ENCODE measurements at regions of chr14 and their contacts with region 1.

Region 1: GRCh38 chr14:74684434-74684833 is 28.4 kb downstream of the AREL1 start:
- DNase-seq: peak in 3 of 9 experiments; percentile 6 to 49 (median 40)
- ATAC-seq: peak; percentile 59
- H3K4me3 ChIP-seq: no peak overlapping the region
- H3K4me3 Mint-ChIP-seq: peak overlapping the region; percentile 39
- H3K27ac ChIP-seq: peak overlapping the region in 1 of 2 experiments; percentile 19
- H3K27ac Mint-ChIP-seq: peak overlapping the region; percentile 72
- H3K4me1 ChIP-seq: peaks cover 23% of the 10 kb centered on the region
- H3K4me1 Mint-ChIP-seq: peaks cover 31% of the 10 kb centered on the region
- H3K27me3 ChIP-seq: no peaks in the 10 kb centered on the region
- H3K27me3 Mint-ChIP-seq: no peaks in the 10 kb centered on the region
- CTCF ChIP-seq: no peak

Region 2: DNA sequence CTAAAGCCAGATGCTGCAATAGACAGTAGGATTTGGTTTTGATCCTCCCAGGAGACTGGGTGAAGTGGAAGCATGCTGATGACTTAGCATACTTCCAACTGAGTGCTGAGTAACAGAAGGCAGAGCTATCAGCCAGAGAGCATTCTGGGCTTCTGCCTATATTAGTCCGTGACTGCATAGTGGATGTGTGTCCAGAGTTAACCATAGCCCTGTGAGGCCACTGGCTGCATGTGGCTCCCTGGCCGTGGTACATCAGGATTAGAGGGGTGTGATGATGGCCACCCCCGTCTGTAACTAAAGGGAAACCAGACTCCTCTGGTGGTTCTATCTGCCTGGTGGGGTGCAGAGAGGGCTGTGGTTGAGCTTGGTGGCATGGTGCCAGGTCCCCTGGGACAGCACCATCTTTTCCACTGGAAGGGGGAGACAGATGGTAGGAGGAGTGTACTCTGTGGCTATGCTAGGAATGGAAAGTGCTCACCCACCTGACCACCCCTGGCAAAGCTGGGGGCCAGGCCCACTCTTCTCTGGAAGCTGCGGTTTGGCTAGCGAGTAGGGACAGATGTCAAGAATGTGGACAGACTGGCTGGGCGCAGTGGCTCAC is 409.1 kb before region 1 on chr14:
- CTCF ChIA-PET with region 1: no interaction called
- POLR2A ChIA-PET with region 1: no interaction called
- intact Hi-C with region 1: no loop called
- DNase-seq: no peak
- ATAC-seq: no peak
- H3K4me3 ChIP-seq: no peak overlapping the region
- H3K4me3 Mint-ChIP-seq: no peak overlapping the region
- H3K27ac ChIP-seq: no peak overlapping the region
- H3K27ac Mint-ChIP-seq: no peak overlapping the region
- H3K4me1 ChIP-seq: no peaks in the 10 kb centered on the region
- H3K4me1 Mint-ChIP-seq: no peaks in the 10 kb centered on the region
- H3K27me3 ChIP-seq: no peaks in the 10 kb centered on the region
- H3K27me3 Mint-ChIP-seq: peaks cover 13% of the 10 kb centered on the region
- CTCF ChIP-seq: no peak

Region 3: GRCh38 chr14:74524076-74524811 is 160.2 kb before region 1 on chr14:
- CTCF ChIA-PET with region 1: no interaction called
- POLR2A ChIA-PET with region 1: no interaction called
- intact Hi-C with region 1: no loop called
- DNase-seq: no peak
- ATAC-seq: no peak
- H3K4me3 ChIP-seq: no peak overlapping the region
- H3K4me3 Mint-ChIP-seq: no peak overlapping the region
- H3K27ac ChIP-seq: no peak overlapping the region
- H3K27ac Mint-ChIP-seq: no peak overlapping the region
- H3K4me1 ChIP-seq: no peaks in the 10 kb centered on the region
- H3K4me1 Mint-ChIP-seq: no peaks in the 10 kb centered on the region
- H3K27me3 ChIP-seq: no peaks in the 10 kb centered on the region
- H3K27me3 Mint-ChIP-seq: no peaks in the 10 kb centered on the region
- CTCF ChIP-seq: no peak

Region 4: DNA sequence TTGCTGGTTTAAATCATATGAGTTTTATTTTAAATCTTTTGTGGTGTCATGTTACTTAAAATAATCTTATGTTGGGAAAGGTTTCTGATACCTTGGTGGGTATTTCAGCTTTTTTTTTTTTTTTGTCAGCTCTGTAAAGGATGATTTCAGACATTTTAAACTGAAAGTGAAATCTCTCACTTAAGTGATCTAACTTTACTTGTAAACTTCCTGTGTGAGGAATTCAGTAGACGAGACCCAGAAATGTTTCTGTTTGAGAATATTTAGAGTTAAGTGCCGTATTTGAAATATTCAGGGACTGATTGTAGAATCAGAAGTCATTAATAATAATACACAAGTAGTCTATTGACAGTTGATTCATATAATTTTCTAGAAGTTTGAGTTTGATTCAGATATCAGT is 153.7 kb after region 1 on chr14:
- CTCF ChIA-PET with region 1: no interaction called
- POLR2A ChIA-PET with region 1: no interaction called
- intact Hi-C with region 1: no loop called
- DNase-seq: peak in 2 of 9 experiments; percentile 50 to 73
- ATAC-seq: peak; percentile 76
- H3K4me3 ChIP-seq: peak overlapping the region in 1 of 2 experiments; percentile 36
- H3K4me3 Mint-ChIP-seq: peak overlapping the region; percentile 76
- H3K27ac ChIP-seq: peak overlapping the region; percentile 71 to 93
- H3K27ac Mint-ChIP-seq: peak overlapping the region; percentile 94
- H3K4me1 ChIP-seq: peaks cover 76% of the 10 kb centered on the region
- H3K4me1 Mint-ChIP-seq: peaks cover 81% of the 10 kb centered on the region
- H3K27me3 ChIP-seq: no peaks in the 10 kb centered on the region
- H3K27me3 Mint-ChIP-seq: no peaks in the 10 kb centered on the region
- CTCF ChIP-seq: no peak

Region 5: DNA sequence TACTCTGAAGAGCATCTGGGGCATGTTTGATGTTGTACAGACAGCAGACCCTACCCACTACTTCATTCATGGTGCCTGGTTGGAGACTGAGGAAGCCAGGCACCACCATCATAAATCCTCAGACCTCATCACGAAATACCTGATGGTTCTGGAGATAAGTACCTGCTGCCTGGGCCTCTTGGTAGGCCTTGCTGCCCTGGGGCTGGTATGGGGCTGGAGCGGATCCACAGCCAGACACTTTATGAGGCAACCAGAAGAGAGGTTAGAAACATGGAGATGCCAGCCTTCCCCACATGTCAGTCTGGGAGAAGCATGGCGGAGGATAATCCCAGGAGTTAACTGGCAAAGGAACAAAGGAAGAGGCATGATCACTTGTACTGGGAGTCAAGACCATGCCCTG is 664.0 kb after region 1 on chr14:
- CTCF ChIA-PET with region 1: no interaction called
- POLR2A ChIA-PET with region 1: no interaction called
- intact Hi-C with region 1: loop called in 1 of 2 experiments (anchors 5 kb)
- DNase-seq: no peak
- ATAC-seq: no peak
- H3K4me3 ChIP-seq: no peak overlapping the region
- H3K4me3 Mint-ChIP-seq: no peak overlapping the region
- H3K27ac ChIP-seq: no peak overlapping the region
- H3K27ac Mint-ChIP-seq: no peak overlapping the region
- H3K4me1 ChIP-seq: no peaks in the 10 kb centered on the region
- H3K4me1 Mint-ChIP-seq: no peaks in the 10 kb centered on the region
- H3K27me3 ChIP-seq: no peaks in the 10 kb centered on the region
- H3K27me3 Mint-ChIP-seq: peaks cover 4% of the 10 kb centered on the region
- CTCF ChIP-seq: no peak

Region 6: GRCh38 chr14:75875958-75876357 is 1191.5 kb after region 1 on chr14:
- CTCF ChIA-PET with region 1: no interaction called
- POLR2A ChIA-PET with region 1: no interaction called
- intact Hi-C with region 1: no loop called
- DNase-seq: no peak
- ATAC-seq: no peak
- H3K4me3 ChIP-seq: no peak overlapping the region
- H3K4me3 Mint-ChIP-seq: no peak overlapping the region
- H3K27ac ChIP-seq: no peak overlapping the region
- H3K27ac Mint-ChIP-seq: no peak overlapping the region
- H3K4me1 ChIP-seq: no peaks in the 10 kb centered on the region
- H3K4me1 Mint-ChIP-seq: no peaks in the 10 kb centered on the region
- H3K27me3 ChIP-seq: no peaks in the 10 kb centered on the region
- H3K27me3 Mint-ChIP-seq: no peaks in the 10 kb centered on the region
- CTCF ChIP-seq: no peak

Measured in CD8-positive, alpha-beta T cell (primary cell).